ENCODE measurements at regions of chr4 and their contacts with region 1.

Region 1: GRCh38 chr4:88211473-88212252 is 53.2 kb upstream of the ABCG2 start:
- DNase-seq: no peak
- H3K4me3 Mint-ChIP-seq: no peak overlapping the region
- H3K27ac Mint-ChIP-seq: no peak overlapping the region
- H3K4me1 Mint-ChIP-seq: no peaks in the 10 kb centered on the region
- H3K27me3 Mint-ChIP-seq: peaks cover 12% of the 10 kb centered on the region

Region 2: GRCh38 chr4:87679449-87680169 is 532.1 kb before region 1 on chr4:
- intact Hi-C with region 1: loop called (anchors 2 kb)
- DNase-seq: no peak
- H3K4me3 Mint-ChIP-seq: no peak overlapping the region
- H3K27ac Mint-ChIP-seq: no peak overlapping the region
- H3K4me1 Mint-ChIP-seq: no peaks in the 10 kb centered on the region
- H3K27me3 Mint-ChIP-seq: no peaks in the 10 kb centered on the region

Region 3: DNA sequence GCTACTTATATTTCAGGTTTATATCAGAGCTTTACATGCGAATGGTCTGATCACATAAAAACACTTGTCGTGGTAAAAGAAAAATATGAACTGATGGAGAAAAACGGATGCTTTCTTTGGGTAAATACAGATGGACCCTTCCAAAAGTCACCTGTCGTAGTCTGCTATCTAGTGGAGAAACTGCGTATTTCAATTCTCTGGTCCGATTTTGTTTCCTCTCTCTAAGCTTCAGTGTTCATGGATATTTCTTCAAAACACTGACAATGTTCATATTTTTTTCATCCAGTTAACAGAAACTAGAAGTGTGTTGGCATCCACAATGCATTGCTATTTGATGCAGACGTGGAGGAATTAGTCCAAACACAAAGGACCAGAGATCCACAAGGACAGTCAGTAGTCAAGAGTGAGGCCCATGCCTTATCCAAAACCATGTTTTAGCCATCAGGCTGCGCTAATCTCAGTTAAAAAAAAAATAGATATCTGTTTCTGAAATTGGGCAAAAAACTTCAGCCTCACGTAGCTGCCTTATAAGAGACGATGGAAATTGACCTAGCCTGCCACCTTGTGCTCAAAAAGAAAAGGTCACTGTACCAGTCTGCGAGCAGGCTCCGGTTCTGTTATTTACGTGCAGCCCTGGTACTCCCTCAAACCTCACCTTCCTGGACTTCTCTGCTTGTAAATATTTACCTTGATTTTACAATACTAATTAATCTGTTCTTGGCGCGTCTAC is 362.9 kb before region 1 on chr4:
- intact Hi-C with region 1: loop called (anchors 1 kb)
- DNase-seq: no peak
- H3K4me3 Mint-ChIP-seq: no peak overlapping the region
- H3K27ac Mint-ChIP-seq: no peak overlapping the region
- H3K4me1 Mint-ChIP-seq: peaks cover 13% of the 10 kb centered on the region
- H3K27me3 Mint-ChIP-seq: peaks cover 34% of the 10 kb centered on the region

Region 4: DNA sequence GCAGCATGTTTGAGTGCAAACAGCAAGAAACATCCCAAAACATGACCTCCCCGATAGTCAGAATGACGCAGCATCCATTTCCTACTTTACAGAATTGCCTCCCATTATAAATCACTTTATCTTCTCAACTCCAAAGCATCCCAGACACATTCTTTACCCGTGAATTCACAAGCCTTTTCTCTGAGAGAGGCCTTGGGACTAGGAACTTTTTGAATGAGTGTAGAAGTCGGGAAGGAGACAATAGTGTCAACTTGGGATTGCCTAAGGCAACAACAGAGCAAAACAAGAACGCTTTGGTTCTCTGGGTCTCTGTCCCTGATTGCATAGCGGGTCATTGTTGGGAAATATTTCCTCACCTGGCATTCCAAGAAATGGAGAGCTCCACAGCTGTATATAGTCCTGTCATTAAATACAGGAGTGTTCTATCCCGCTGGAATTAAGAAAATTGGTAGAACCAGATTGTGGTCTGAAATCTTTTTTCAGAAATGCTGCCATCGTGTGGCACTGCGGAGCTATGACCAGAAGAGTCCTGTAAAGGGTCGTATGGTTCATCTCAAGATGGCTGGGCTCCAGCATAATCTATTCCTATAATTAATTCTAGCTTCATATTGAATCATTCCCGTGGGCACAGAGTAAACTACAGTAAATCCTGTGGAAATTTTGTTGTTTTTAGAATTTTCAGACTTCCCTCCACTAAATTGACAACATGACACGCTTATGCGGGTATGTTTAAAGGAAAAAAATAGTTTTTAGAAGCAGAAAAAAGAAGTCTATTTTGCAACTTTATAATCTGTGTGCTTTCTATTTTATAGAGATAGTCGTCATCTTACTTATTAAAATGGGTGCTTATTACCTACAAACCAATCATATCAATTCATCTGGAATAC is 238.1 kb before region 1 on chr4:
- intact Hi-C with region 1: loop called (anchors 5 kb)
- DNase-seq: no peak
- H3K4me3 Mint-ChIP-seq: no peak overlapping the region
- H3K27ac Mint-ChIP-seq: no peak overlapping the region
- H3K4me1 Mint-ChIP-seq: peaks cover 6% of the 10 kb centered on the region
- H3K27me3 Mint-ChIP-seq: peaks cover 49% of the 10 kb centered on the region

Region 5: GRCh38 chr4:88033309-88033708 is 178.4 kb before region 1 on chr4:
- intact Hi-C with region 1: loop called (anchors 1 kb)
- DNase-seq: peak; percentile 16
- H3K4me3 Mint-ChIP-seq: no peak overlapping the region
- H3K27ac Mint-ChIP-seq: no peak overlapping the region
- H3K4me1 Mint-ChIP-seq: peaks cover 20% of the 10 kb centered on the region
- H3K27me3 Mint-ChIP-seq: no peaks in the 10 kb centered on the region

Region 6: GRCh38 chr4:88366460-88366859 is 154.8 kb after region 1 on chr4:
- intact Hi-C with region 1: loop called (anchors 5 kb)
- DNase-seq: no peak
- H3K4me3 Mint-ChIP-seq: no peak overlapping the region
- H3K27ac Mint-ChIP-seq: no peak overlapping the region
- H3K4me1 Mint-ChIP-seq: peaks cover 7% of the 10 kb centered on the region
- H3K27me3 Mint-ChIP-seq: peaks cover 3% of the 10 kb centered on the region

Region 7: GRCh38 chr4:89024051-89024675 is 812.5 kb after region 1 on chr4:
- intact Hi-C with region 1: loop called (anchors 5 kb)
- DNase-seq: peak; percentile 14
- H3K4me3 Mint-ChIP-seq: no peak overlapping the region
- H3K27ac Mint-ChIP-seq: no peak overlapping the region
- H3K4me1 Mint-ChIP-seq: no peaks in the 10 kb centered on the region
- H3K27me3 Mint-ChIP-seq: peaks cover 2% of the 10 kb centered on the region